ENCODE measurements at regions of chr10 and their contacts with region 1.

Region 1: DNA sequence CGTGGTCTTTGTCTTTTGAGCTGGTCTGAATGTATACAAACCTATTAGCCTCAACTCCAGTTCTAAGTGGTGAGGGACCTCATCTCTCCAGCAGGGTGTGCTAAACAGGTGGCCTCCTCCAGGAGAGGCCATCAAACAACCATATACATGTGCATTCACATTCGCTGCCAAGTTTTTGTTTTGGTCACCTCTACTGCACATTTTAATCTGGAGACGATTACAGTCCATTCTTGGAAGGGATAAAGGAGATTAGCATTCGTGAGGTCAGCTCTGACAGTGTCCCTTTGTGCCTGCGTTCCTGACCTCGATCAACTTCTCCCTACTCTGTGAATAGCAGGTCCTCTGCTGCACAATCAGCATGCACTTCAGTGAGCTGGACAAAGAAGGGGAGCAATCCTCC is 60.8 kb downstream of the RHOBTB1 start:
- H3K4me3 Mint-ChIP-seq: no peak overlapping the region
- H3K27ac Mint-ChIP-seq: no peak overlapping the region
- H3K4me1 Mint-ChIP-seq: peaks cover 5% of the 10 kb centered on the region
- H3K27me3 Mint-ChIP-seq: no peaks in the 10 kb centered on the region

Region 2: GRCh38 chr10:60964257-60965235 is 81.4 kb after region 1 on chr10:
- intact Hi-C with region 1: loop called (anchors 10 kb)
- H3K4me3 Mint-ChIP-seq: no peak overlapping the region
- H3K27ac Mint-ChIP-seq: no peak overlapping the region
- H3K4me1 Mint-ChIP-seq: peaks cover 34% of the 10 kb centered on the region
- H3K27me3 Mint-ChIP-seq: peaks cover 8% of the 10 kb centered on the region